Activated CD4-positive, alpha-beta T cell treated with anti-CD3 and anti-CD28 coated beads for 36 hours (primary cell): ENCODE measurements at regions of chrX and their contacts with region 1.

Region 1: DNA sequence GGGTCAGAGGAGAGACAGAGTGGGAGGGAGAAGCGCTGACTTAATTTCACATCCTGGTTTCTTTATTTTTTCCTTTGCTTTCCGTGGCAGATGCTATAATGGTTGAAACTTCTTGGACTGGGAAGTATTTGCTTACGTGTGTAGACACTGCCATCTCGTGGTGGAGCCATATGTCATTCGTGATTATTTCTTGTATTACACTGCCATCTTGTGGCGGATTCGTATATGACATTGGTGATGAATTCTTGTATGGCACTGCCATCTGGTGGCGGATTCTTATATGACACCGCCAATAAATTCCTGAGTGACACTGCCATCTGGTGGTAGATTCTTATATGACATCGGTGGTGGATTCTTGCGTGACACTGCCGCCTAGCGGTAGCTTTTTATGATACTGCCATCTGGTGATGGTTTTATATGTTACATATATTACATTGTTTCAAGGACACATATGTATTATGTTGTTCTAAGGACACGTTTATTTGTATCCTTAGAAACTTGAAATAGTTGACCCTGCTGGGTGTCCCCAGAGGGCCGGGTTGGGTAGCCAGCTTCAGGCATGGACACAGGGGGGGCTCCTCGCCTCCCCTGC is 37.3 kb upstream of the CLCN4 start:
- DNase-seq: peak; percentile 76
- ATAC-seq: peak; percentile 77
- H3K4me3 Mint-ChIP-seq: no peak overlapping the region
- H3K27ac Mint-ChIP-seq: peak overlapping the region; percentile 30
- H3K4me1 Mint-ChIP-seq: peaks cover 11% of the 10 kb centered on the region
- H3K27me3 Mint-ChIP-seq: no peaks in the 10 kb centered on the region

Region 2: DNA sequence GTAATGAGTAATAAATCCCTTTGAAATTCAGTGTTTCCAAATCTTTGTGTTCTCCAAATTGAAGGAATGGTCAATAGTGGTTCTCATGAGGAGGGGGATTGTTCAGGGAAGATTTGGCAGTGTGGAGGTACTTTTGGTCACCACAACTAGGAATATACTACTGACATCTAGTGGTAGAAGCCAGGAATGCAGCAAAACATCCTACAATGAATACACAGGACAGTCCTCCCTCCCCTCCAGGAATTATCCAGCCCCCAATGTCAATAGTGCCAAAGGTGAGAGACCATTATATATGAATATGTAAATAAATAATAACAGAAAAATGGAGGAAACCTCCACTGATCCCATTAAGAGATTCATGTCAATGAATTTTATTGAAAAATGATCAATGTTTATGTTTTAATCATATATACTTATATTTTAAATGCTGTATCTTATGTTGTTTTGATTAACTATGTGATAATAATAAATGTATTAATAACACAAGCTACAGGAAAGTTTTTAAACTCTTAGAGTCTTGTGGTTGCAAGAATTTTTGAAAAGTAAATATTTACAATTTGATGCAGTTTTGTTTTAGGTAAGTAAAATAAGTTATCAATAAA is 1303.9 kb before region 1 on chrX:
- CTCF ChIA-PET with region 1: no interaction called
- POLR2A ChIA-PET with region 1: no interaction called
- intact Hi-C with region 1: loop called in 1 of 2 experiments (anchors 5 kb)
- DNase-seq: peak; percentile 3
- ATAC-seq: no peak
- H3K4me3 Mint-ChIP-seq: no peak overlapping the region
- H3K27ac Mint-ChIP-seq: no peak overlapping the region
- H3K4me1 Mint-ChIP-seq: no peaks in the 10 kb centered on the region
- H3K27me3 Mint-ChIP-seq: no peaks in the 10 kb centered on the region

Region 3: DNA sequence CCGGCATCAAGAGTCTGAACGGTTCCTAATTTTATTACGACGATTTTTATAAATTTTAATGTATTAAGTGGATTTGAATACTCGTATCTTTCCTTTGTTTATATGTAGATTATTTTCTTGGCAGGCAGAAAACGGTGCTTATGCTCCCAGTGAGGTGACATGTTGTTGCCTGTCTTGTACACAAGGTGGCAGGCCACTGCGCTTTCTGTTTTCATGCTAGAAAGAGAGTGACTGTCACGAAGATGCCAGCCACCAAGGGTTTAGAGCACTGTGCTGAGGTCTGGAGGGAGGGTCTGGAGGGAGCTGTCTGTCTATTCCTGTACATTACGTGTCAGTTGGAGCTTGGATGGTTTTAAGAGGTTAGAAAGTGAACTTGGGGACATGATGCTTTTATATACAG is 245.5 kb before region 1 on chrX:
- CTCF ChIA-PET with region 1: interaction called, 19 read pairs
- POLR2A ChIA-PET with region 1: no interaction called
- intact Hi-C with region 1: loop called (anchors 1 to 5 kb)
- DNase-seq: peak; percentile 62
- ATAC-seq: peak; percentile 75
- H3K4me3 Mint-ChIP-seq: no peak overlapping the region
- H3K27ac Mint-ChIP-seq: no peak overlapping the region
- H3K4me1 Mint-ChIP-seq: peaks cover 14% of the 10 kb centered on the region
- H3K27me3 Mint-ChIP-seq: peaks cover 8% of the 10 kb centered on the region

Region 4: DNA sequence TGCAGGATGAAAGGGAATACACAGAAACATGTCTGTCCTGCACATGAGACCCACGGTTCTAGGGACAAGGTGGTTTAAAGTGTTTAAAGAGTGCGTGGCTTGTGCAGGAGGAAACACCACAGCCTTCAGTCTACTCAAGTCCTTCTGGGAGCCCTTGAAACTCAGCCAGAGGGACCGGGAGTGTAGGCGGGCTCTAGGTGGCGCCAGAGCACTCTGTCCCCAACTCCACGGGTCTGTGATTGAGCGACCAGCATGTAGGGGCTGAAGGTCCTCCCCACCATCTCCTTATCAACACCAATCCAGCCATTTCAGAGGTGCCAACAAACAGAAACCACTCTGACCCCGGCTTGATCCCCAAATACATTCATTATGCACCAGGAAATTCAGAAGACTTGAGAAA is 234.3 kb before region 1 on chrX:
- CTCF ChIA-PET with region 1: interaction called, 6 read pairs
- POLR2A ChIA-PET with region 1: no interaction called
- intact Hi-C with region 1: loop called (anchors 1 kb)
- DNase-seq: peak; percentile 74
- ATAC-seq: peak; percentile 83
- H3K4me3 Mint-ChIP-seq: no peak overlapping the region
- H3K27ac Mint-ChIP-seq: no peak overlapping the region
- H3K4me1 Mint-ChIP-seq: peaks cover 2% of the 10 kb centered on the region
- H3K27me3 Mint-ChIP-seq: no peaks in the 10 kb centered on the region

Region 5: DNA sequence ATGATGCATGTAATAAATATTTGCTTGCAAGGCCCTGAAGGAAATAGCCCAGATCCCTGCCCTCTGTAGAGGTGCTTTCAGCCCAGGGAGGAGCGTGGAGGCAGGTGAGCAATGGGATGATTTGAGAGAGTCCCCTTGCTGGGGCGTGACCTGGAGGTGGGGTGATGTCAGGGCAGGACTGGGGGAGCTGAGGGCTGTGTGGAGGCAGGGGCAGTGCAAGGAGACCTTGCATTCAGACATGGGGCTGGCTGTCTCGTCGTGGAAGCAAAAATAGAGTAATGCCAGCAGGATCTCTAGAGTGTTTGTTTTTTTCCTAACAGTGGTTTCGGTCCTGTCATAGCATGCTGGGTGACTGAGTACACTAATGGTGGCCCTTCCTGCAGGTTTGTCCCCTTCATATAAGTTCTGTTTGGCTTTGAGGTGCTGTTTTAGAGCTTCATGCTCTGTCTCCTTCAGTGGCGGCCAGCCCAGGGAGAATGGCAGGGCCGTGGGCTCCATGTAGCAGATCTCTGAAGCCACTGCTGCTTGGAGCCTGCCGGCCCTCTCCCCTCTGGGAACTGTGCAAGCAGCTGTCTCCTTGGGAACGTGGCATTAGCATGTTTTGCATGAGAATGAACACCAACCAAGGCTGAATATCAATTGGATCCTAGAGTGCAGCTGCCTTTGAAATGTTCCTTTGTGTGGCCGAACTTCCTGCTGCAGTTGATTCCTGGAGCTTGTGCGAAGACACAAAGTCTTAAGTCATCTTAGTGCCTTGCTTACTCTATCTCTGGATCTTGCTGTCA is 191.6 kb before region 1 on chrX:
- CTCF ChIA-PET with region 1: no interaction called
- POLR2A ChIA-PET with region 1: no interaction called
- intact Hi-C with region 1: no loop called
- DNase-seq: no peak
- ATAC-seq: no peak
- H3K4me3 Mint-ChIP-seq: no peak overlapping the region
- H3K27ac Mint-ChIP-seq: no peak overlapping the region
- H3K4me1 Mint-ChIP-seq: no peaks in the 10 kb centered on the region
- H3K27me3 Mint-ChIP-seq: no peaks in the 10 kb centered on the region

Region 6: GRCh38 chrX:9988762-9989161 is 130.7 kb before region 1 on chrX:
- CTCF ChIA-PET with region 1: interaction called, 12 read pairs
- POLR2A ChIA-PET with region 1: no interaction called
- intact Hi-C with region 1: no loop called
- DNase-seq: no peak
- ATAC-seq: no peak
- H3K4me3 Mint-ChIP-seq: no peak overlapping the region
- H3K27ac Mint-ChIP-seq: no peak overlapping the region
- H3K4me1 Mint-ChIP-seq: no peaks in the 10 kb centered on the region
- H3K27me3 Mint-ChIP-seq: no peaks in the 10 kb centered on the region

Region 7: GRCh38 chrX:10083809-10084208 is 35.7 kb before region 1 on chrX:
- CTCF ChIA-PET with region 1: interaction called, 14 read pairs
- POLR2A ChIA-PET with region 1: no interaction called
- intact Hi-C with region 1: loop called in 1 of 2 experiments (anchors 5 kb)
- DNase-seq: no peak
- ATAC-seq: no peak
- H3K4me3 Mint-ChIP-seq: no peak overlapping the region
- H3K27ac Mint-ChIP-seq: no peak overlapping the region
- H3K4me1 Mint-ChIP-seq: peaks cover 35% of the 10 kb centered on the region
- H3K27me3 Mint-ChIP-seq: no peaks in the 10 kb centered on the region

Region 8: DNA sequence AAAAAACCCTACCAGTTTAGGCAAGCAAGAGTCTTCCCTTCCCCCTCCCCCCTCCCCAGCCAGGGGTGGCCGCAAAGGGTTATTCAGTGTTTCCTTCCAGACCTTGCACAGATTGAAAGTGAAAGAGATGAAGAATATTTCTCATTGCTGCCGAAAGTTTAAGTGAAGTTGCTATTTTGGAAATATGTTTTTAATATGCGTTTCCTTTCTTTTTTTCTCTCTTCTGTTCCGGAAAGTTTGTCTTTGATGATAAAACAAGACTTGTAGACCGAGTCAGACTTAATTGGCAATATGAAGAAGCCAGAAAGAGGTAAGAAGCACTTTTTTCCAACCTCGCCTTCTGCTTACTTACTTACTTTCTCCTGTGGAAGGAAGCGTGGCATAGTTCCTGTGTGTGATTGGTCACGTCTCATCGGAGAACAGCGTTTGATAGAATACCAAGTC is 21.2 kb before region 1 on chrX:
- CTCF ChIA-PET with region 1: interaction called, 10 read pairs
- POLR2A ChIA-PET with region 1: no interaction called
- intact Hi-C with region 1: loop called in 1 of 2 experiments (anchors 2 kb)
- DNase-seq: peak; percentile 81
- ATAC-seq: peak; percentile 71
- H3K4me3 Mint-ChIP-seq: peak overlapping the region; percentile 67
- H3K27ac Mint-ChIP-seq: peak overlapping the region; percentile 94
- H3K4me1 Mint-ChIP-seq: peaks cover 49% of the 10 kb centered on the region
- H3K27me3 Mint-ChIP-seq: no peaks in the 10 kb centered on the region

Region 9: GRCh38 chrX:10519761-10520160 is 400.3 kb after region 1 on chrX:
- CTCF ChIA-PET with region 1: no interaction called
- POLR2A ChIA-PET with region 1: no interaction called
- intact Hi-C with region 1: no loop called
- DNase-seq: no peak
- ATAC-seq: no peak
- H3K4me3 Mint-ChIP-seq: no peak overlapping the region
- H3K27ac Mint-ChIP-seq: no peak overlapping the region
- H3K4me1 Mint-ChIP-seq: no peaks in the 10 kb centered on the region
- H3K27me3 Mint-ChIP-seq: no peaks in the 10 kb centered on the region